Adrenal gland (tissue), 19 donors: ENCODE measurements at regions of chr9 and their contacts with region 1.

Region 1: DNA sequence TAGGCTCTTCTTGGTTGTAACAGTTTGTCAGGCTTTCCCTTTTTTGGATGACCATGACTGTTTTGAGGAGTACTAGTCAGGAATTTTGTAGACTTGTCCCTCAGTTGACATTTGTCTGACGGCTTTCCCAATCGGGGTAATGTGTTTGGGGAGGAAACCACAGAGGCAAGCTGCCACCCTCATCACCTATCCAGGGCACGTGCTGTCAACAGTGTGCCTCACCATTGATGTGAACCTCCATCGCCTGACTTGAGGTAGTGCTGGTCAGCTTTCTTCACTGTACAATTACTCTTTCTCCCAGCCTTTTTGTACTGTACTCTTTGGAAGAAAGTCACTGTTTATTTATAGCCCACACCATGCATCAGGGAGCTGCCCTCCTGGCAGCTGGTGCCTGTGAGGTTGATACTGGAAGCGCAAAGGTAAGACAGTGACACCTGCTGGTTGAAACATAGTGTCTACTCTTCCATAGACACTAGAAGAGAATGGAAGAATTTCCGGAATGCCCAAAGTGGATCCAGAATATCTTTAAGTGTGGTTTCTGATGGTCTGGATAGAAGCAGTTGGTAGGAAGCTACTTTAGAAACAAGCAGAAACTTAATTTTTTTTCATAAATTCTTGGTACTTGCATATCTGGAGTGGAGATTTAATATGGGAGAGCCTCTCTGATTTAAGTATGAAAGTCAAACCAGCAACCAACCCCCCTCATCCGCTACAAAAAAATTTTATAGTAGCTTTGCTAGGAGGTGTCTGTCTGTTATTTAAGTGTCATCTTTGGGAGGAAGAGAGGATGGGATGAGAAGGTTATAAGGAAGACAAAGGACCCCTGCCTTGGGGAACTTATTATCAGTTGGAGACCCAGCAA is 69.3 kb downstream of the SNX30 start:
- DNase-seq: peak; percentile 55 to 80 (median 64)
- H3K4me3 ChIP-seq: no peak overlapping the region
- H3K27ac ChIP-seq: no peak overlapping the region
- H3K4me1 ChIP-seq: peaks cover 0 to 14% of the 10 kb centered on the region in 2 donors
- H3K27me3 ChIP-seq: no peaks in the 10 kb centered on the region
- CTCF ChIP-seq: peak; percentile 47 to 68 (median 66)
- POLR2A ChIP-seq: no peak

Region 2: GRCh38 chr9:112670991-112671625 is 148.8 kb before region 1 on chr9:
- intact Hi-C with region 1: no loop called
- DNase-seq: no peak
- H3K4me3 ChIP-seq: no peak overlapping the region
- H3K27ac ChIP-seq: no peak overlapping the region
- H3K4me1 ChIP-seq: no peaks in the 10 kb centered on the region
- H3K27me3 ChIP-seq: no peaks in the 10 kb centered on the region
- CTCF ChIP-seq: no peak
- POLR2A ChIP-seq: no peak

Region 3: DNA sequence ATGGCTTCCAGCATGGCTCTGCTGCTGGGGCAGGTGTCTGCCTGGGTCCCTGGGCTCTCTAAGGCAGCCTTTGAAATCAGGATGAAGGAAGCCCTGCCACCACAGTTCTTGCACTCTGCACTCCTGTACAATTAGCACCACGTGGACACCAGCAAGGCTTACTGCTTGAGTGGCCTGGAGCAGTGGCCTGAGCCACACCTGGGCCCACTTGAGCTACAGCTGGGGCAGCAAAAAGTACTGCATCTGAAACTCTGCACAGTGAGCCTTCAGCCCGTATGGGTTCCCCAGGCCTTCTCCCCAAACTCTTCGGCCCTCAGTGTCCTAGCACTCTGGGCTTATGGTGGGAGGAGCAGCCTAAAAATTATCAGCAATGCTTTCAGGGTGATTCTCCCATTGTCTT is 93.9 kb before region 1 on chr9:
- intact Hi-C with region 1: loop called in 1 of 2 experiments (anchors 10 kb)
- DNase-seq: no peak
- H3K4me3 ChIP-seq: no peak overlapping the region
- H3K27ac ChIP-seq: peak overlapping the region in 2 of 5 donors; percentile 49 to 63
- H3K4me1 ChIP-seq: peaks cover 0 to 9% of the 10 kb centered on the region in 2 donors
- H3K27me3 ChIP-seq: no peaks in the 10 kb centered on the region
- CTCF ChIP-seq: no peak
- POLR2A ChIP-seq: no peak

Region 4: DNA sequence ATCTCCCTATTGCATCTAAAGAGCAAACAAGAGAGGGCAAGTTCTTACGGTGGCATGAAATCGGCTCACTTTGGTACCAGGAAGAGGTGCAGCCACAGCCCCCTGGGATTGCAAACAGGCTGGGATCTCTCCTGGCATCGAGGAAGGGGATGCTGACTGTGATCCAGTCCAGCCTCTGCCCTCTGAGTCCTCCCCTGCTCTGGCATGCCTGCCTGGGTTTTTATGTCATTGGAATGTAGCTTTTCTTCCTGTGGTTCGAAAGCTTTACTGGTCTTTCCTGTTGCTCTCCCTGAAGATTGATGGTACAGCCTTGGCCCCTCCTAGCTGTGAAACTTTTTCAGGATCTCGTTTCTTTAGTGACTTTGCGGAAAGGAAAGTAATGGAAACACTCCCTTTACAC is 64.2 kb after region 1 on chr9:
- intact Hi-C with region 1: no loop called
- DNase-seq: no peak
- H3K4me3 ChIP-seq: no peak overlapping the region
- H3K27ac ChIP-seq: no peak overlapping the region
- H3K4me1 ChIP-seq: no peaks in the 10 kb centered on the region
- H3K27me3 ChIP-seq: no peaks in the 10 kb centered on the region
- CTCF ChIP-seq: no peak
- POLR2A ChIP-seq: no peak